Caco-2 (cell line): ENCODE measurements at regions of chr1 and their contacts with region 1.

Region 1: GRCh38 chr1:155001675-155002463 is 733 bp upstream of the ZBTB7B start:
- DNase-seq: peak; percentile 100
- H3K4me3 ChIP-seq: peak overlapping the region; percentile 92
- H3K4me3 Mint-ChIP-seq: peak overlapping the region; percentile 96
- H3K27ac Mint-ChIP-seq: peak overlapping the region; percentile 96
- H3K4me1 ChIP-seq: peaks cover 25% of the 10 kb centered on the region
- H3K4me1 Mint-ChIP-seq: peaks cover 30% of the 10 kb centered on the region
- H3K27me3 ChIP-seq: no peaks in the 10 kb centered on the region
- H3K27me3 Mint-ChIP-seq: no peaks in the 10 kb centered on the region
- CTCF ChIP-seq: peak; percentile 27 to 75

Region 2: DNA sequence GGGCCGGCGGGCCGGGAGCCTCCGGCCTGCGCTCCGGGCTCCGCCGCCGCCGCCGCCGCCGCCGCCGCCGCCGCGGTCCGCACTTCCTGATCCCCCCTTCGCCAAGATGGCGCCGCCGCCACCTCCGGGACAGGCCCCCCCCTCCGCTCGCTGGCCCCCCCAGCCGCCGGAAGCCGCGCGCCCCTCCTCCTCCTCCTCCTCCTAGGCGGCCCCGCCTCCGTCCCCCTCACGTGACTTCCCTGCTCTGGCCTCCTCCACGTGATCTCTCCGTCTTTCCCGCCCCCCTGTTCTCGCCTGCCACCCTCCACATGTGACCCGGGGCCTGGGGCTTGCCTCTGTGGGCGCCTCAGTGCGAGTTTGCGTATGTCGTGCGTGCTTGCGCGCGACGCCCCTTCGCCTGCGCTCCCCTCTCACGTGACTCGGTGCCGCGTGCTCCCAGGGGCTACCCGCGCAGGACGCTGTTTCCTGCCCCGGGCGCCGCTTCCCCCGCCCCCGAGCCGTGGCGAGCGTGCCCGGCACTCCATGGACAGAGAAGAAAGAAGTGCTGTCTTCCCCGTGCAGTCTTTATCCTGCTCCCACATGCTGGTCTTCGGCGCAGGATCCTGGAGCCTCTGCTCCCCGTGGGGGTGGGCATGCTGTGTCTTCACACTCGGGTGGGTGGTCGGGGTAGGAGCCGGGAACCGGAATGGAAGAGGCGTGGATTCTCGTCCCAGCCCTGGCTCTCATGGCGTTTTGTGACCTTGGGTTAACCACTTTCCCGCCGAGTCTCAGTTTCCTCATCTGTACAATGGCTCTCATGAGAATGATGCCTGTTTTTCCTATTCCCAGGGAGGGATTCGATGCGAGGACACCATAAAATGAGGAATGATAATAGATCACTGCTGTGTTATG is 443.0 kb before region 1 on chr1 and contains the start of gene UBE2Q1:
- CTCF ChIA-PET with region 1: interaction called, 6 read pairs
- POLR2A ChIA-PET with region 1: no interaction called
- intact Hi-C with region 1: loop called (anchors 2 kb)
- DNase-seq: peak; percentile 98 to 99
- H3K4me3 ChIP-seq: peak within 1 kb of the TSS; percentile 85
- H3K4me3 Mint-ChIP-seq: peak within 1 kb of the TSS; percentile 90
- H3K27ac Mint-ChIP-seq: peak within 1 kb of the TSS; percentile 91
- H3K4me1 ChIP-seq: peaks cover 13% of the 10 kb centered on the region
- H3K4me1 Mint-ChIP-seq: peaks cover 13% of the 10 kb centered on the region
- H3K27me3 ChIP-seq: no peaks in the 10 kb centered on the region
- H3K27me3 Mint-ChIP-seq: no peaks in the 10 kb centered on the region
- CTCF ChIP-seq: no peak
- total RNA-seq, gene UBE2Q1: 92.2 and 93.2 TPM in 2 replicates

Region 3: DNA sequence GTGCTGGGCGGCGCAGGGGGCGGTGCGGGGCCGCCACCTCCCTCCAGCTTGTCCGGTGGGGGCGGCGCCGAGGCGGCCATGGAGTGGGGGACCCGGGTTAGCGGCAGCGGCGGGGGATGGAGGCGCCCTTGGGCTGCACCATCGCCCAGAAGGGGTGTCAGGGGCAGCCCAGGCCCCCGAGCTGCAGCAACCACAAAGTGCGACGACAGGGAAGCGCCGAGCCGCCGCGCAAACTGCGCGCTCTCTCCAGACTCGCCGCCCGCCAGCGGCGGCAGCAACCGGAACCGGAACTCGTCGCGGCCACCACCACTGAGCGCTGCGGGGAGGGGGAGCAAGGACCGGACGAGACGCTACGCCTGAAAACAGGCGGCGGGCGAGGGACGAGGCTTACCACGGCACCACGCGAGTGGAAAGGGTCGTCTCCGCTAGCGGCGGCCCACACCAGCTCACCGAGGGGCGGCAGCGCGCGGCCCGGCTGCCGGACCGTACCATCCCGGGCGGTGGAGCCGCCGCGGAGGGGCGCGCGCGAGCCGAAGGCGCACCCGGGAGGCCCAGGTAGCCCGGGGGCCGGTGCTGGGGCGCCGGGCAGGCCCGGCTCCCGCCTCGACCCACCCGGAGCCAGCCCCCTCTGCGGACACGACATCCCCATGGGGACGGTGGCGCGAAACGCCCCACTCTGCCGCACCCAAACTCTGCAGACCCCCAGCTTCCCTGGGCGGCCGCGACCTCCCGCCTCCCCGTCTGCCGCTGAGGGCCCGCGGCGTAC is 40.2 kb before region 1 on chr1 and contains the start of gene PYGO2:
- CTCF ChIA-PET with region 1: interaction called, 17 read pairs
- POLR2A ChIA-PET with region 1: interaction called, 17 read pairs
- intact Hi-C with region 1: loop called (anchors 1 kb)
- DNase-seq: peak; percentile 80 to 90
- H3K4me3 ChIP-seq: peak within 1 kb of the TSS; percentile 95
- H3K4me3 Mint-ChIP-seq: peak within 1 kb of the TSS; percentile 88
- H3K27ac Mint-ChIP-seq: peak within 1 kb of the TSS; percentile 81
- H3K4me1 ChIP-seq: peaks cover 12% of the 10 kb centered on the region
- H3K4me1 Mint-ChIP-seq: peaks cover 16% of the 10 kb centered on the region
- H3K27me3 ChIP-seq: no peaks in the 10 kb centered on the region
- H3K27me3 Mint-ChIP-seq: no peaks in the 10 kb centered on the region
- CTCF ChIP-seq: peak; percentile 23 to 55
- total RNA-seq, gene PYGO2: 34.1 and 34.9 TPM in 2 replicates

Region 4: GRCh38 chr1:154982897-154983648 is 18.8 kb before region 1 on chr1 and contains the start of gene FLAD1:
- CTCF ChIA-PET with region 1: interaction called, 26 read pairs
- POLR2A ChIA-PET with region 1: interaction called, 12 read pairs
- intact Hi-C with region 1: loop called (anchors 1 kb)
- DNase-seq: peak; percentile 98 to 100
- H3K4me3 ChIP-seq: peak within 1 kb of the TSS; percentile 82
- H3K4me3 Mint-ChIP-seq: no peak within 1 kb of the TSS
- H3K27ac Mint-ChIP-seq: no peak within 1 kb of the TSS
- H3K4me1 ChIP-seq: no peaks in the 10 kb centered on the region; the same call in 1 of the 2 replicates
- H3K4me1 Mint-ChIP-seq: no peaks in the 10 kb centered on the region
- H3K27me3 ChIP-seq: no peaks in the 10 kb centered on the region
- H3K27me3 Mint-ChIP-seq: no peaks in the 10 kb centered on the region
- CTCF ChIP-seq: no peak
- total RNA-seq, gene FLAD1: 51.3 and 61.5 TPM in 2 replicates

Region 5: GRCh38 chr1:155050560-155051341 is 48.9 kb after region 1 on chr1 and contains the start of gene ADAM15:
- CTCF ChIA-PET with region 1: interaction called, 7 read pairs
- POLR2A ChIA-PET with region 1: interaction called, 9 read pairs
- intact Hi-C with region 1: loop called (anchors 1 kb)
- DNase-seq: peak; percentile 80 to 90
- H3K4me3 ChIP-seq: peak within 1 kb of the TSS; percentile 61
- H3K4me3 Mint-ChIP-seq: peak within 1 kb of the TSS; percentile 88
- H3K27ac Mint-ChIP-seq: peak within 1 kb of the TSS; percentile 86
- H3K4me1 ChIP-seq: peaks cover 20% of the 10 kb centered on the region
- H3K4me1 Mint-ChIP-seq: peaks cover 19% of the 10 kb centered on the region
- H3K27me3 ChIP-seq: no peaks in the 10 kb centered on the region
- H3K27me3 Mint-ChIP-seq: no peaks in the 10 kb centered on the region
- CTCF ChIP-seq: peak; percentile 86 to 90
- total RNA-seq, gene ADAM15: 44.0 and 48.2 TPM in 2 replicates

Region 6: DNA sequence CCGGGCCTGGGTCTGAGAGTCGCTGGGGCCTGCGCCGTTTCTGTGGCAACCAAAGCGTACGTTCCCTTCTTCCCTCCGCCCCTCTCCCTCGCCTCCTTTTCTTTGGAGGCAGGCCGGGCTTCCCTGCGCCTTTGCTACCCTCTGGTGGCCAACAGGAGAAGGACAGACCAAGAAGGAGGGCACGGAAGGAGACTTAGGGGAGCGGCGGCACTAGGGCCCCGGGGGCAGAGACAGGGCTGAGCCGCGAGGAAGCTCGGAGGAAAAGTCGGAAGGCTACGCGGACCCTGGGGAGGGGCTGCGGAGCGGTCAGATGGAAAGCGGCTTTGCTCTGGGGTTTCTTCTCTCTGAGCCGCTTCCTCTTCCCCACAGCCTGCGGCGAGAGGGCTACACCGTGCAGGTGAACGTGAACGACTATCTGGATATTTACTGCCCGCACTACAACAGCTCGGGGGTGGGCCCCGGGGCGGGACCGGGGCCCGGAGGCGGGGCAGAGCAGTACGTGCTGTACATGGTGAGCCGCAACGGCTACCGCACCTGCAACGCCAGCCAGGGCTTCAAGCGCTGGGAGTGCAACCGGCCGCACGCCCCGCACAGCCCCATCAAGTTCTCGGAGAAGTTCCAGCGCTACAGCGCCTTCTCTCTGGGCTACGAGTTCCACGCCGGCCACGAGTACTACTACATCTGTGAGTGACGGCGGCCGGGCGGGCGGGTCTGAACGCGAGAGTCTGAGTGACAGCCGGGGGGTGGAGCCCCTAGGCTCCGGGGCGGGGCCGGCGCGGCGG is 83.0 kb after region 1 on chr1:
- CTCF ChIA-PET with region 1: interaction called, 4 read pairs
- POLR2A ChIA-PET with region 1: no interaction called
- intact Hi-C with region 1: loop called (anchors 5 kb)
- DNase-seq: peak; percentile 93 to 96
- H3K4me3 ChIP-seq: peak overlapping the region; percentile 64
- H3K4me3 Mint-ChIP-seq: peak overlapping the region; percentile 94
- H3K27ac Mint-ChIP-seq: peak overlapping the region; percentile 83
- H3K4me1 ChIP-seq: peaks cover 28% of the 10 kb centered on the region
- H3K4me1 Mint-ChIP-seq: peaks cover 8% of the 10 kb centered on the region
- H3K27me3 ChIP-seq: 0 out of 2 replicates have a peak, but pooled peaks cover 2% of the 10 kb centered on the region
- H3K27me3 Mint-ChIP-seq: peaks cover 11% of the 10 kb centered on the region
- CTCF ChIP-seq: peak; percentile 86 to 91

Region 7: DNA sequence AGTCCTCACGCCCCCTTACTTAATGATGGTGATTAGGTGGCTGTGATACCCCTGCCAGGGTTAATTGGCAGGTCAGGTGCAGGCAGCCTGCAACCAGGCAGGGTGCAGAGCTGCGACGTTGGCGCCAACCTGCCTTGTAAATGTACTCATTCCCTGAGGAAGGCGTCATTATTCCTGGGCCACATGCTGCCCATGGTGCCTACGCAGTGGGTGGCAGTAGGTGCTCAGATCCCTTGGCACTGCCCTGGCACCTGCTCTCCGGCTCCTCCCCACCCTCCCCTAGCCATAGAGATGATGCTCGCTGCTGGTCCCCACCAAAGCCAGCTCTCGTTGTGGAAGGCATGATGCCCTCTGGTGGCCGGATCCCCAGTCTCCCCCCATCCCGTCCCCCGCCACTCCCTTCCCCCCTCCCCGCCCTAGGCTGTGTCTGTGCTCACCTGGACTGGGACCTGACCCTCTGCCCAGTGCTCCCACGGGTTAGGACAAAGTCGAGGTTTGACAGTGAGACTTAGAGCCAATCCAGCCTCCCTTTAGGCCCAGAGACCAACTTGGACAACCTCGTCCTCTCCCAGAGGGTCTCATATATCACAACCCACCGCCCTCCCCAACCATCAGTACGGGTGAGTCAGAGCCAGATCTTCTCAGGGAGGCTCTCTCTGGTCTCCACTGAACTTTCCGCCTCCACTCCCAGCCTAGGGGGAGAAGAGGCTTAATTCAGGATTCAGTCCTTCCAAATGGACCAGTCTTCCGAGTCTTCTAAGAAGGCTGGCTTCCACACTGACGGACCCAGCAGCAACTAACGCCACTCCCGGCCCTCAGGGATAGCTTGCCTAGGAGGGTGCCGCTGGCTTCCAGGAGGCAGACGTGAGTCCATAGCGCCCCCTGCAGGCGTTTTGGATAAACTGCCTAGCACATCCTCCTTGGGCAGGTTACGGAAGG is 165.6 kb after region 1 on chr1:
- CTCF ChIA-PET with region 1: no interaction called
- POLR2A ChIA-PET with region 1: no interaction called
- intact Hi-C with region 1: no loop called
- DNase-seq: peak; percentile 86 to 89
- H3K4me3 ChIP-seq: peak overlapping the region; percentile 23
- H3K4me3 Mint-ChIP-seq: peak overlapping the region; percentile 66
- H3K27ac Mint-ChIP-seq: peak overlapping the region; percentile 24
- H3K4me1 ChIP-seq: peaks cover 10% of the 10 kb centered on the region; the same call in 1 of the 2 replicates
- H3K4me1 Mint-ChIP-seq: no peaks in the 10 kb centered on the region
- H3K27me3 ChIP-seq: no peaks in the 10 kb centered on the region
- H3K27me3 Mint-ChIP-seq: no peaks in the 10 kb centered on the region
- CTCF ChIP-seq: peak; percentile 79 to 93